Left colon (tissue), 2 donors: ENCODE measurements at regions of chr5 and their contacts with region 1.

Region 1: DNA sequence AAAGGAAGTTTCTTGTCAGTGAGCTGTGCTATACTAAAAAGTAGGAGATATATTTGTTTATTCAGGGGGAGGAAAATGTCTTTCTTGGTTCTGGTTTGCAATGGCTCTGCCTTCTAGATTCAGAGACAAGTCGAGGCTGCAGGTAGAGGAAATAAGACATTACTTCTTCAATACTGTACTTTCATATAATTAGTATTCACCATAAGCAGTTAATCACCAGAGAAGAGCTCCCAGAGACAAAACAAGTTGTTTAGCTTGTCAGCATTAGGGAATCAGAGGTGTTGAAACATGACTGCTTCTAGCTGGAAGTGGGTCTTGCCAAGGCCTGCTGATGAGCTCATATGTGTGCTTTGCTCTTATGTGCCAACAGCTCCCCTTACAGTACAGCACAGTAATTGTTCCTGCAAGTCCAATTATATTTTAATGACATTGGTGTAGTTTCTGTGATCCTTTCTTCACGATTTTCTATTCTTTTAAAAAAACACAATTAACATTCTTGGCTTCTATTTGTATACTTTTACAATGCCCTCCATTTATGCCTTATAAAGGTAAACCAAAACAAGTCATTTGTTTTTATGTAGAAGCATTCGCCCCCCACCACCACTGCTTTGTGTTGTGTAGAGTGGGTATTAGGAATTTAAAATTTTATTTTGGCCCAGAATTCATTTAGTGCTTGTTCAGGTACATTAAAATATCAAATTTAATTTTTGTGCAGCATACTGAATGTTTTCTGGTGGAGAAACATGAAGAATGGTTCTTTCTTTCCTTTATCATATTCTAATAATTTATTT is 112.2 kb downstream of the RPS23 start:
- DNase-seq: peak; percentile 39 to 63
- ATAC-seq: peak; percentile 99

Region 2: DNA sequence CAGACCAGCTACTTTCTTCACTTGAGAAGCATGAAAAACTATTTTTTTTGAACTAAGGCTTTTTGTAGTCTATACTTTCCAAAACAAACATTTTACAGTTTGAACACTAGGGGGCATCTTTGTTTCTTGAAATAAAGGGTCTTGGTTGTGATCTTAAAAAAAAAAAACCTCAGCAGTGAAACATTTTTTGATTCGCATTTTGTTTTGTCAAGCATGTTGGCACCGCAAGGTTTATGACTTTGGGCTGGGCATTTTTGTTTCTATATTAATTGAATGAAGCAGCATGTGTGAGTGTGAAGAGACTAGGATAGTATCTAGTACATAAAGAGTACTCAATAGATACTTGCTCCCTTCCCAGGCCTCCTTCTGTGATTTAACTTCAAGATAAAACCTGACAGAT is 740.4 kb before region 1 on chr5:
- intact Hi-C with region 1: loop called in 1 of 2 experiments (anchors 5 kb)
- DNase-seq: no peak
- ATAC-seq: peak; percentile 45

Region 3: GRCh38 chr5:81506900-81507588 is 658.9 kb before region 1 on chr5:
- intact Hi-C with region 1: loop called in 1 of 2 experiments (anchors 5 kb)
- DNase-seq: peak; percentile 14 to 36
- ATAC-seq: peak; percentile 99

Region 4: GRCh38 chr5:81787474-81788242 is 378.3 kb before region 1 on chr5:
- intact Hi-C with region 1: loop called in 1 of 2 experiments (anchors 5 kb)
- DNase-seq: peak; percentile 41 to 50
- ATAC-seq: no peak

Region 5: DNA sequence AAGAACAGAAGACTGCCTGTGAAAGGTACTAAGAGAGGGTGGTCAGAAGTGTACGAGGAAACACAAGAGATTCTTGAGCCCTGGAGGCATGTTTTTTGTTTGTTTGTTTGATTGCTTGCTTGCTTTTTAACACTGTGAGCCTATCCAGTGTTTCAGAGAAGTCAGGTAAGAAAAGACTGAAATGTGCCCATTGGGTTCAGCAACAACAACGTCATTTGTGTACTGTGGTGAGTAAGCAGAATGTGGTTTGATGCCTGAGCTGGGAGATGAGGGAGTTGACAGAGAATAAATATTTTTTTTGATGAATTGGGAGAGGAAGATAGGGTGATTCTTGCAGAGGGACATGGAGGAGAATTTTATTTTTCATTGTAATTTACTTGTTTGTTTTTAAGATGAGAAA is 39.1 kb after region 1 on chr5:
- intact Hi-C with region 1: no loop called
- DNase-seq: no peak
- ATAC-seq: no peak

Region 6: DNA sequence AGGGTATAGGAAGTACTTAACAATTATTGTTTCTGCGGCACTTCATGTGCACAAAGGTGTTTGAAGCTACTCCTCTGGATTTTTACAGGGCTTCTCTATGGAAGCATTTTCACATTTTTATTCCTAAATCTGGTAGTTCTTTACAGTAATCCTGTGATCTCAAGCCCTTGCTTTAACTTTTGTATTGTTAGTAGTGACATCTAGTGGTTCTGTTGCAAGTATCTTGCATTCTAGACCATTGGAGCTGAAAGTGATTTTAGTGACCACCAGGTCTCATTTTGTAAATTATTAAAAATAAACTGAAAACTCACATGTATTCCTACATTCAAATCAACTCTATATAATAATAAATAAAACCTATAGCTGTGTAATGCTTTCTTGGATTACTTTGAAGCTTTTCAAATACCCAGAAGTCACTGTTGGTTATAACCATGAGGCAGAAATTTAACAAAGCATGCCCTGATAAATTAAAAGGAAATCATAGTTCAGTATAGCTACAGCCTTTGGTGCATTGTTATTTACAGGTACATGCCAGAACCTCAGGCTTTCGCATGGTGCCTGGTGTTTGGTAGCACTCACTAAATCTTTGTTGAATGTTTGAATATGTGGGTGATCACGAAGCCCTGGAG is 93.4 kb after region 1 on chr5:
- intact Hi-C with region 1: no loop called
- DNase-seq: no peak
- ATAC-seq: no peak